B cell (primary cell): ENCODE measurements at regions of chr12 and their contacts with region 1.

Region 1: GRCh38 chr12:71810905-71811304 is 28.7 kb upstream of the TBC1D15 start:
- DNase-seq: no peak
- ATAC-seq: no peak
- H3K4me3 ChIP-seq: no peak overlapping the region
- H3K4me3 Mint-ChIP-seq: no peak overlapping the region
- H3K27ac ChIP-seq: no peak overlapping the region
- H3K27ac Mint-ChIP-seq: no peak overlapping the region
- H3K4me1 ChIP-seq: no peaks in the 10 kb centered on the region
- H3K4me1 Mint-ChIP-seq: no peaks in the 10 kb centered on the region
- H3K27me3 ChIP-seq: peaks cover 0 to 8% (median 2%) of the 10 kb centered on the region in 4 experiments
- H3K27me3 Mint-ChIP-seq: peaks cover 40% of the 10 kb centered on the region
- CTCF ChIP-seq: no peak

Region 2: GRCh38 chr12:71828810-71829209 is 17.9 kb after region 1 on chr12:
- CTCF ChIA-PET with region 1: no interaction called
- POLR2A ChIA-PET with region 1: no interaction called
- intact Hi-C with region 1: loop called (anchors 1 kb)
- DNase-seq: no peak
- ATAC-seq: no peak
- H3K4me3 ChIP-seq: no peak overlapping the region
- H3K4me3 Mint-ChIP-seq: no peak overlapping the region
- H3K27ac ChIP-seq: no peak overlapping the region
- H3K27ac Mint-ChIP-seq: no peak overlapping the region
- H3K4me1 ChIP-seq: no peaks in the 10 kb centered on the region
- H3K4me1 Mint-ChIP-seq: no peaks in the 10 kb centered on the region
- H3K27me3 ChIP-seq: no peaks in the 10 kb centered on the region
- H3K27me3 Mint-ChIP-seq: peaks cover 15% of the 10 kb centered on the region
- CTCF ChIP-seq: no peak